PC-3 (cell line): ENCODE measurements at regions of chr17 and their contacts with region 1.

Region 1: DNA sequence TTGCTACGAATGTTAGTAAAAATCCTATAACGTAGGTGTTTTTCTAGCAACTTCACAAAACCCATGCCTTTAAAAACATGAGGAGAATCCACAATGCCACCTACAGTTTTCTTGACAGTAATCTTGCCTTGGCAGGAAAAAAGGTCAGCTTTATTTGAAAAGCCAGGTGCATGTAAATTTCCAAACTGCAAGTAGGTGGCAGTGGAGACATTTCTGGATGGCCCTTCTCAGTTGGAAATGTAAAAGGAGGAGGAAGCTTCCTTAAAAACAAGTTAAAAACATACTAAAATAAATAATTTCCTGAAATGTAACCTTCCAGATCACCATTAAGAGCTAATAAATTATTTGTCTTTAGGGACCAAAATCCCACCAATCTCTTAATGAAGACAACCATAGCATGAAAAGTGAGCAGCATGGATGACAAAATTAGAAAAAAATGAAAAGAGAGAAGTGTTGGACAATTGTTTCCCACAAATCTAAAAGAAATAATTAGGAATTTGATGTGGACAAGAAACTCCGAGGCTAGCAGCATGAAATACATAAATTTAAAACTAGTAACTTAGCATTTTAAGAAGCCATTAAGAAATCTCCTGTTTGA is 152.2 kb downstream of the SNX11 start:
- DNase-seq: peak; percentile 87
- ATAC-seq: peak; percentile 50
- H3K4me3 ChIP-seq: no peak overlapping the region
- H3K27ac ChIP-seq: no peak overlapping the region
- H3K4me1 ChIP-seq: peaks cover 17% of the 10 kb centered on the region
- H3K27me3 ChIP-seq: no peaks in the 10 kb centered on the region
- CTCF ChIP-seq: peak; percentile 95

Region 2: DNA sequence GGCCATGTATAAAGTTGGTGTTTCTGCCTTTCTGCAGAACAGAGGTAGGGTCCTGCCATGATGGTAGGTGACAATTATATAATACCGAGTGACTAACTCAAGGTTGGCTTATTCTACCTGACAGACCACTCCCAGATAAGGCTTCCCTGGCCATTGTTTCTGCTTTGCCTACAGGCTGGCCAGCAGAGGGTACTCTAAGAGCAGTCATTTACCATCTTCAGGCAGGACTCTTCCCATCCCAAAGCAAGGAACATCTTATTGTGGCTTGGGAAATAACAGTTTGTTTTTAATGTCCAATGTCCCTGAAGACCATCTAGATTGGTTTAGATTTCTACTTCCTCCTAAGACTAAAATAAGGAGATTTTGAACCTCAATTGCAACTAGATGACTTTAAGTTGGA is 78.1 kb before region 1 on chr17:
- CTCF ChIA-PET with region 1: interaction called, 3 read pairs
- POLR2A ChIA-PET with region 1: no interaction called
- intact Hi-C with region 1: loop called (anchors 1 kb)
- DNase-seq: peak; percentile 69
- ATAC-seq: peak; percentile 77
- H3K4me3 ChIP-seq: no peak overlapping the region
- H3K27ac ChIP-seq: no peak overlapping the region
- H3K4me1 ChIP-seq: peaks cover 11% of the 10 kb centered on the region
- H3K27me3 ChIP-seq: peaks cover 10% of the 10 kb centered on the region; the same call in 1 of the 2 replicates
- CTCF ChIP-seq: peak; percentile 92

Region 3: DNA sequence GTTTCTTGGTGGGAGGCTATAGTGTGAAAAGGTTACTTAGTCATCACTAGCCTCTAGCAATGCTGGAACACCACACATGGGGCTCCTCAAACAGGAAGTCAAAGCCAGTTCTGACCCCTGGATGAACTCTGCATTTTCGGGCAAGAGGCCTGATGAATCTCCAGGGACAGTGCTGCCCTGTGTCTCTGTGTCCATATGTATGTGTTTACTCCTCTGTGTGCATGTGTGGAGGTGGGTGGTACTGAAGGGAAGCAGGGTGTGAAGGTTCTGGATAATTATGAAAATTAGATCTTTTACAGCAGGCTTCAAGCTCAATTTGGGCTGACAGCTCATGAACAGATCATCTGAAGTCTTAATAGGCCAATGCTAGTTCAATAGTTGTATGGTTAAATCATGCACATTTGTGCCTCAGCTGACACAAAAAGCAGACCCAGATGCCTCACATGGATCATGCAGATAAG is 18.6 kb before region 1 on chr17:
- CTCF ChIA-PET with region 1: interaction called, 7 read pairs
- POLR2A ChIA-PET with region 1: interaction called, 3 read pairs
- intact Hi-C with region 1: loop called (anchors 1 kb)
- DNase-seq: peak; percentile 87
- ATAC-seq: peak; percentile 29; the same call in 1 of the 2 replicates
- H3K4me3 ChIP-seq: no peak overlapping the region
- H3K27ac ChIP-seq: peak overlapping the region; percentile 89
- H3K4me1 ChIP-seq: peaks cover 94% of the 10 kb centered on the region
- H3K27me3 ChIP-seq: no peaks in the 10 kb centered on the region
- CTCF ChIP-seq: no peak

Region 4: DNA sequence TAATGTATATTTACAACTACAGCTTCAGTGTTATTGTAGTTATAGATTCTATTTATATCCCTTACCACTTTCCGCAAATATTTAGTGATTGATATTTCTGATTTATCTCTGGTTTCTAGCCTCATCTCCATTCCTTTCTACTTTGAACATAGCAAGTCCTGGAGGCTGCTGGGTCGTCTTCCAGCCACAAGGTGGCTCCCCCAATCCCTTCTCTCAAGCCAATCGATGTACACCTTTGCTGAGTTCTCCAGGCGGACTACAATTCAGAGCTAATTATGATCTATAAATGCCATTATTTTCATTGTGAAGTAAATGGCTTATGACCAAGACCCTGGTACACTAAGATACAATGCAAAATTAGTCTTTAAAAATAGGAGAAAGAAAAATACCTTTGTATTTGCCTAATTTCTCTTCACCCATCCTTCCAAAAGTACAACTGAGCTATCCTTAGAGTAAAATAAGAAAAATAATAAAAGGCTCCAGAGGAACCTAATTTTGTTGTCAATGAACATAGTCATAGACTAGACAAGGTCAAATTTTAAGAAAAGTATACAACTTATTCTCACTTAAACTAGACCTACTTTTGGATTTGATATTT is 48.1 kb after region 1 on chr17:
- CTCF ChIA-PET with region 1: interaction called, 6 read pairs
- POLR2A ChIA-PET with region 1: no interaction called
- intact Hi-C with region 1: loop called (anchors 5 kb)
- DNase-seq: peak; percentile 84
- ATAC-seq: peak; percentile 98
- H3K4me3 ChIP-seq: no peak overlapping the region
- H3K27ac ChIP-seq: no peak overlapping the region
- H3K4me1 ChIP-seq: no peaks in the 10 kb centered on the region
- H3K27me3 ChIP-seq: peaks cover 39% of the 10 kb centered on the region
- CTCF ChIP-seq: peak; percentile 98

Region 5: GRCh38 chr17:48584223-48584741 is 324.5 kb after region 1 on chr17:
- CTCF ChIA-PET with region 1: no interaction called
- POLR2A ChIA-PET with region 1: no interaction called
- intact Hi-C with region 1: no loop called
- DNase-seq: no peak
- ATAC-seq: no peak
- H3K4me3 ChIP-seq: peak overlapping the region; percentile 83
- H3K27ac ChIP-seq: no peak overlapping the region
- H3K4me1 ChIP-seq: peaks cover 22% of the 10 kb centered on the region
- H3K27me3 ChIP-seq: no peaks in the 10 kb centered on the region
- CTCF ChIP-seq: no peak

Region 6: GRCh38 chr17:48618256-48618897 is 358.6 kb after region 1 on chr17:
- CTCF ChIA-PET with region 1: interaction called, 5 read pairs
- POLR2A ChIA-PET with region 1: no interaction called
- intact Hi-C with region 1: loop called (anchors 1 kb)
- DNase-seq: peak; percentile 97
- ATAC-seq: peak; percentile 66
- H3K4me3 ChIP-seq: peak overlapping the region; percentile 80
- H3K27ac ChIP-seq: no peak overlapping the region
- H3K4me1 ChIP-seq: peaks cover 29% of the 10 kb centered on the region
- H3K27me3 ChIP-seq: peaks cover 60% of the 10 kb centered on the region
- CTCF ChIP-seq: peak; percentile 98